ENCODE measurements at regions of chr16 and their contacts with region 1.

Region 1: GRCh38 chr16:67017810-67018488 is 11.0 kb upstream of the CBFB start:
- DNase-seq: peak; percentile 93 to 97
- ATAC-seq: peak; percentile 89 to 98
- H3K4me3 ChIP-seq: no peak overlapping the region
- H3K27ac ChIP-seq: peak overlapping the region in 1 of 2 experiments; percentile 49; a peak in 2 of 6 replicates
- H3K4me1 ChIP-seq: peaks cover 3% of the 10 kb centered on the region; the same call in 2 of the 3 replicates
- CTCF ChIP-seq: peak; percentile 84
- EP300 ChIP-seq: no peak
- POLR2A ChIP-seq: no peak
- RAD21 ChIP-seq: peak; percentile 84 to 92

Region 2: DNA sequence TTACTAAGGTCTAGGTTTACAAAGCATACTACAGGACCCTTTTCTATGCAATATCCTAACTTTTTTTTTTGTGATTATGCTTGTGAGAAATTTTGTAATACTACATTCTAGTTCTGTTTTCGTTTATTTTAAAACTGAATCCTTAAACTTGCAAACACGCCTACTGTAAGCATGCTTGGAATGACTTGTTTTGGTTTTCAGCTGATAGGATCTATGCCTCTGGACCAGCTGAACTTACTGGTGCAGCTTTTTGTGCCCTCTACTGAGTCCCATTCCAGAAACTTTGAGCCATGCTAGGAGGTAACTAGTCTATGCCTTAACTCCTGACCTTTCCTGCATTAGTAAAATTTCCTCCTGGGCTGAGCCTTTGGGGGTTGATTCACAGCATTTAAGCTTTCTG is 131.6 kb before region 1 on chr16:
- CTCF ChIA-PET with region 1: no interaction called
- POLR2A ChIA-PET with region 1: no interaction called
- DNase-seq: no peak
- ATAC-seq: no peak
- H3K4me3 ChIP-seq: no peak overlapping the region
- H3K27ac ChIP-seq: no peak overlapping the region
- H3K4me1 ChIP-seq: peaks cover 11% of the 10 kb centered on the region; the same call in 2 of the 3 replicates
- CTCF ChIP-seq: no peak
- EP300 ChIP-seq: no peak
- POLR2A ChIP-seq: no peak
- RAD21 ChIP-seq: no peak

Region 3: GRCh38 chr16:66961065-66961744 is 56.7 kb before region 1 on chr16 and contains the start of gene CES3:
- CTCF ChIA-PET with region 1: interaction called, 10 read pairs
- POLR2A ChIA-PET with region 1: no interaction called
- DNase-seq: peak; percentile 80 to 85
- ATAC-seq: peak; percentile 99 to 100
- H3K4me3 ChIP-seq: peak within 1 kb of the TSS; percentile 33
- H3K27ac ChIP-seq: peak within 1 kb of the TSS; percentile 49 to 82; a peak in 4 of 6 replicates
- H3K4me1 ChIP-seq: no peaks in the 10 kb centered on the region
- CTCF ChIP-seq: peak; percentile 85
- EP300 ChIP-seq: no peak
- POLR2A ChIP-seq: no peak
- RAD21 ChIP-seq: peak in 1 of 2 experiments; percentile 18; a peak in 1 of 5 replicates
- polyA plus RNA-seq, gene CES3: 3.8 and 4.1 TPM in 2 replicates

Region 4: GRCh38 chr16:67000384-67001351 is 17.3 kb before region 1 on chr16:
- CTCF ChIA-PET with region 1: interaction called, 14 read pairs
- POLR2A ChIA-PET with region 1: no interaction called
- DNase-seq: peak in 1 of 2 experiments; percentile 58
- ATAC-seq: peak; percentile 66 to 81
- H3K4me3 ChIP-seq: peak overlapping the region; percentile 66
- H3K27ac ChIP-seq: peak overlapping the region; percentile 79 to 82; a peak in 5 of 6 replicates
- H3K4me1 ChIP-seq: peaks cover 24% of the 10 kb centered on the region
- CTCF ChIP-seq: no peak
- EP300 ChIP-seq: no peak
- POLR2A ChIP-seq: peak; percentile 32
- RAD21 ChIP-seq: no peak

Region 5: DNA sequence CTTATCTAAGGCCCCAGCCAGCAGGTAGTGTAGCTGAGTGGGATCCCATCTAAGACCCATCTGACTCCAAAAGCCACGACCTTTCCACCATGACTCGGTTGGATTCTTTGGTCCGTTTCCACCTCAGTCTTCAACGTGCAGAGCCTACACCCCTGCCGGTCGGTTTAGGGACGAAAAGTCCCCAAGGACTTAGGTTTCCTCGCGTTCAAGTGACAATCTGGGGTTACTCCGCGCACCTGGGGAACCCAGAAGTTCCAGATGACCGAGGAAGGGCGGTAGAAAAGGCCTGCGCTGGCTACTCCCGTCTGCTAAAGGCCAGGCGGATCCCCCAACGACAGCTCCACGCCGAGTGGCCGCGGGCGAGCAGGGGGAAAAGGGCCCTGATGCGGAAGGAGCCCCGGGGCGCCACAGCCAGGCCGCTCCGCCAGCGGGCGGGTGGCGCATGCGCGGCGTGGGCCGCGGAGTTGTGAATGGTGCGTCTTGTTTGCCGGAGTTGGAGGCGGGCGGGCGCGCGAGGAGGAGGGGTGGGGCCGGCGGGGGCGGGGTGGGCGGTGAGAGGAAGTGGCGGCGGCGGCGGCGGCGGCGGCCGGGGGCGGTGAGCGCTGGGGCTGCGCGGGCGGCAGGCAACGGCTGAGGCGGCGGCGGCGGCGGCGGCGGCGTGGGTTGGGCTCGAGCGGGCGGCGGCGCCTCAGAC is 10.8 kb after region 1 on chr16 and contains the start of gene CBFB:
- CTCF ChIA-PET with region 1: interaction called, 47 read pairs
- POLR2A ChIA-PET with region 1: interaction called, 6 read pairs
- DNase-seq: peak; percentile 95 to 97
- ATAC-seq: peak; percentile 93 to 94
- H3K4me3 ChIP-seq: peak within 1 kb of the TSS; percentile 95
- H3K27ac ChIP-seq: peak within 1 kb of the TSS; percentile 72 to 93
- H3K4me1 ChIP-seq: peaks cover 12% of the 10 kb centered on the region
- CTCF ChIP-seq: no peak
- EP300 ChIP-seq: no peak
- POLR2A ChIP-seq: peak; percentile 96
- RAD21 ChIP-seq: no peak; a peak in 1 of 5 replicates
- polyA plus RNA-seq, gene CBFB: 35.9 and 61.3 TPM in 2 replicates

Region 6: GRCh38 chr16:67150833-67151396 is 133.0 kb after region 1 on chr16 and contains the start of gene B3GNT9:
- CTCF ChIA-PET with region 1: interaction called, 94 read pairs
- POLR2A ChIA-PET with region 1: interaction called, 6 read pairs
- DNase-seq: peak; percentile 65 to 82
- ATAC-seq: peak; percentile 74 to 81
- H3K4me3 ChIP-seq: peak within 1 kb of the TSS; percentile 76
- H3K27ac ChIP-seq: peak within 1 kb of the TSS; percentile 84 to 96
- H3K4me1 ChIP-seq: peaks cover 14% of the 10 kb centered on the region
- CTCF ChIP-seq: no peak
- EP300 ChIP-seq: no peak
- POLR2A ChIP-seq: 0 out of 2 replicates have a peak, but pooled peaks have one; percentile 2
- RAD21 ChIP-seq: no peak
- polyA plus RNA-seq, gene B3GNT9: 6.8 and 8.5 TPM in 2 replicates

Region 7: GRCh38 chr16:67326472-67327309 is 308.7 kb after region 1 on chr16 and contains the starts of genes KCTD19 and LRRC36:
- CTCF ChIA-PET with region 1: no interaction called
- POLR2A ChIA-PET with region 1: no interaction called
- DNase-seq: peak; percentile 80 to 93
- ATAC-seq: peak; percentile 99
- H3K4me3 ChIP-seq: peak within 1 kb of the TSS; percentile 60
- H3K27ac ChIP-seq: peak within 1 kb of the TSS; percentile 70 to 82
- H3K4me1 ChIP-seq: peaks cover 15% of the 10 kb centered on the region
- CTCF ChIP-seq: peak; percentile 62
- EP300 ChIP-seq: no peak
- POLR2A ChIP-seq: no peak
- RAD21 ChIP-seq: peak; percentile 39 to 61
- polyA plus RNA-seq, gene KCTD19: 1.1 and 2.4 TPM in 2 replicates
- polyA plus RNA-seq, gene LRRC36: 0.57 and 0.93 TPM in 2 replicates

Measured in A549 (cell line).